CD8-positive, alpha-beta T cell (primary cell): ENCODE measurements at regions of chr15 and their contacts with region 1.

Region 1: GRCh38 chr15:42273102-42273899 is at the starts of genes GANC and TMEM87A:
- DNase-seq: peak; percentile 91 to 99 (median 95)
- ATAC-seq: peak; percentile 90
- H3K4me3 ChIP-seq: peak within 1 kb of the TSS; percentile 90 to 93
- H3K4me3 Mint-ChIP-seq: peak within 1 kb of the TSS; percentile 99
- H3K27ac ChIP-seq: peak within 1 kb of the TSS; percentile 95 to 96
- H3K27ac Mint-ChIP-seq: peak within 1 kb of the TSS; percentile 100
- H3K4me1 ChIP-seq: peaks cover 38% of the 10 kb centered on the region
- H3K4me1 Mint-ChIP-seq: peaks cover 61% of the 10 kb centered on the region
- H3K27me3 ChIP-seq: no peaks in the 10 kb centered on the region
- H3K27me3 Mint-ChIP-seq: no peaks in the 10 kb centered on the region
- CTCF ChIP-seq: no peak
- total RNA-seq, gene GANC: 15.5 to 19.3 TPM
- total RNA-seq, gene TMEM87A: 71.0 to 74.5 TPM

Region 2: GRCh38 chr15:41116116-41116871 is 1157.0 kb before region 1 on chr15 and contains the start of gene INO80:
- CTCF ChIA-PET with region 1: no interaction called
- POLR2A ChIA-PET with region 1: no interaction called
- intact Hi-C with region 1: loop called in 1 of 2 experiments (anchors 10 kb)
- DNase-seq: peak; percentile 90 to 98 (median 96)
- ATAC-seq: peak; percentile 74
- H3K4me3 ChIP-seq: peak within 1 kb of the TSS; percentile 68 to 98
- H3K4me3 Mint-ChIP-seq: peak within 1 kb of the TSS; percentile 96
- H3K27ac ChIP-seq: peak within 1 kb of the TSS; percentile 83 to 96
- H3K27ac Mint-ChIP-seq: peak within 1 kb of the TSS; percentile 99
- H3K4me1 ChIP-seq: peaks cover 15% of the 10 kb centered on the region
- H3K4me1 Mint-ChIP-seq: peaks cover 28% of the 10 kb centered on the region
- H3K27me3 ChIP-seq: no peaks in the 10 kb centered on the region
- H3K27me3 Mint-ChIP-seq: no peaks in the 10 kb centered on the region
- CTCF ChIP-seq: no peak
- total RNA-seq, gene INO80: 19.7 to 24.2 TPM

Region 3: DNA sequence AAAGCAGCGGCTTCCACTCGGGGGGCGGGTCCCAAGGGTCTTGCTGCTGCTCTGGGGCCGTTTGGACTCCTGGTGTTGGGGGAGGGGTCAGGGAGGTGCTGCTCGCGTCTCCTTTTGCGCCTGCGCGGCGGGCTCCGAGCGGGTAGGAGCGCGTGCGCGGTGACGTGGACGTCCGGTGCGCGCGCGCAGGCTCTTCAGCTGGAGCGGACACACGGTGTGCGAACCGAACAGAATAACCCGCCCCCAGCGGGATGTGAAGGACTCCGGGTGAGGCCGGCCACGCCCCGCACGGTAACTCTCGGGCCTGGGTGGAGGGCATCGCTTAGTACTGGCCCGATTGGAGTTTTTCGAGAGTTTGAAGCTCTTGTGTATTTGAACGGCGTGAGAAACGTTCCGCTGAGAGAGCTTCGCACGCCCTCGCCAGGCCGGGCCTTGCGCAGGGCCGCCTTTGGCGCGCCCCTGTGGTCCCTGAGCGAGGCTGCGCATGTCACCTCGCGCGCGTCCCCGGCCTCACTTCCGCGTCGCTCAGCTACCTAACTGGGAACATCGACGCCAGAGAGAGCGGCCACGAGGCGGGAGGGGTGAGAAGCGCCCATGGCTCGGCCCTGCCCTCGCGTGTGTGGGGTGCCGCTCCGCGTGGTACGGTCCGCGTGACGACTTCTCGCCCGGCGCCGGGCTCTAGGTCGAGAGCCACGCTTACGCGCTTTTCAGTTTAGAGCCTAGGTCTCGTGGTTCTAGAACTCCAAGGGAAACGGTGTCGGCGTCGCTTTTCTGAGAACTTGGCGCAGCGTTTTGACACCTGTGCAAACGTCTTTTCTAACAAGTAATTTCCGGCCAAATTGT is 612.8 kb before region 1 on chr15 and contains the start of gene MGA:
- CTCF ChIA-PET with region 1: no interaction called
- POLR2A ChIA-PET with region 1: no interaction called
- intact Hi-C with region 1: loop called in 1 of 2 experiments (anchors 2 kb)
- DNase-seq: peak; percentile 74 to 95 (median 89)
- ATAC-seq: peak; percentile 79
- H3K4me3 ChIP-seq: peak within 1 kb of the TSS; percentile 56 to 62
- H3K4me3 Mint-ChIP-seq: peak within 1 kb of the TSS; percentile 86
- H3K27ac ChIP-seq: peak within 1 kb of the TSS; percentile 90 to 98
- H3K27ac Mint-ChIP-seq: peak within 1 kb of the TSS; percentile 89
- H3K4me1 ChIP-seq: peaks cover 31% of the 10 kb centered on the region
- H3K4me1 Mint-ChIP-seq: peaks cover 54% of the 10 kb centered on the region
- H3K27me3 ChIP-seq: peaks cover 0 to 3% of the 10 kb centered on the region in 2 experiments
- H3K27me3 Mint-ChIP-seq: no peaks in the 10 kb centered on the region
- CTCF ChIP-seq: no peak
- total RNA-seq, gene MGA: 32.9 to 35.7 TPM

Region 4: GRCh38 chr15:41795996-41796856 is 477.1 kb before region 1 on chr15:
- CTCF ChIA-PET with region 1: no interaction called
- POLR2A ChIA-PET with region 1: no interaction called
- intact Hi-C with region 1: no loop called
- DNase-seq: no peak
- ATAC-seq: no peak
- H3K4me3 ChIP-seq: no peak overlapping the region
- H3K4me3 Mint-ChIP-seq: no peak overlapping the region
- H3K27ac ChIP-seq: no peak overlapping the region
- H3K27ac Mint-ChIP-seq: peak overlapping the region; percentile 62
- H3K4me1 ChIP-seq: peaks cover 12% of the 10 kb centered on the region
- H3K4me1 Mint-ChIP-seq: peaks cover 28% of the 10 kb centered on the region
- H3K27me3 ChIP-seq: no peaks in the 10 kb centered on the region
- H3K27me3 Mint-ChIP-seq: no peaks in the 10 kb centered on the region
- CTCF ChIP-seq: no peak

Region 5: DNA sequence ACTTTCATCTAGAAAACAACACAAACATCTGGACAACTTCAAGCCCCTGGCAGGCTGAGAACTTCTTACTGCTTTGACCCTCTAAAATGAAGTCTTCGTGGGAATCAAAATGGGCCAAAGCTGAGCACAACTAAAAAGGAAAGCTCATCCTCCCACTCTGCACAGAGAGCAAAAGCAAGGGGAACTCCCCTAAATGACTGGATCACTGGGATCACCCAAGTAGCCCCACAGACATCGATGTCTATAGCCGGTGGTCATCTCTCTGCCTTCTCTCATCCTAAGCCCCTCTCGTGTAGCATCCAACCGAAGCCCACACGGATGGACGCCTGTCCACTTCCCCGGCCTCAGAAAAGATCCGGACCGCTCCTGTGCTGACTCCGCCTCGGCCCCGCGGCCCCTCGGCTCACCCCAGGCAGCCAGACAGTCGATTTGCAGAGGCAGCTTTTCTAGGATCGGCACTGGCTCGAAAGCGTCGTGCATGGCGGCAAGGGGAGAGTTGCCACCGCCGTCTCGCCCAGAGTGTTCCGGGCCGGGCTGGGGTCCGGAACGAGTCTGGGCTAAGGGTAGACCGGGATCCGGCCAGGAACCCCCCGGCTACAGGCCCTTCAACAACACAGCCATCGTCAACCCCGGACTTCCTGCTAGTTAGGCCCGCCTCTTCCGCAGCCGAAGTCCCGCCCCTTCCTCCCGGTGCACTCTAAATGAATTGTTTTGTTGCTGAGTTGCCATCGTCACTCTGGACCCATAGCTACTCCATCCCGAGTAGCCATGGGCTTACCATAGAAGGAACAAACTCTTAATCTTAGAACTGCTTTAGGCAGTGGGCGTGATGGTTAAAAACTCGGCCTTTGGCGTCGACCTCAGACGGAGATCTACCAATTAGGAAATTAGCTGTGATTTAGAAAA is 65.4 kb before region 1 on chr15 and contains the start of gene VPS39:
- CTCF ChIA-PET with region 1: no interaction called
- POLR2A ChIA-PET with region 1: interaction called, 6 read pairs
- intact Hi-C with region 1: loop called (anchors 1 kb)
- DNase-seq: peak; percentile 65 to 90 (median 85)
- ATAC-seq: peak; percentile 98
- H3K4me3 ChIP-seq: peak within 1 kb of the TSS; percentile 73 to 96
- H3K4me3 Mint-ChIP-seq: peak within 1 kb of the TSS; percentile 97
- H3K27ac ChIP-seq: peak within 1 kb of the TSS; percentile 83 to 84
- H3K27ac Mint-ChIP-seq: peak within 1 kb of the TSS; percentile 95
- H3K4me1 ChIP-seq: peaks cover 23% of the 10 kb centered on the region
- H3K4me1 Mint-ChIP-seq: peaks cover 40% of the 10 kb centered on the region
- H3K27me3 ChIP-seq: no peaks in the 10 kb centered on the region
- H3K27me3 Mint-ChIP-seq: no peaks in the 10 kb centered on the region
- CTCF ChIP-seq: no peak
- total RNA-seq, gene VPS39: 81.5 to 82.9 TPM

Region 6: GRCh38 chr15:42575188-42576039 is 302.1 kb after region 1 on chr15 and contains the start of gene STARD9:
- CTCF ChIA-PET with region 1: no interaction called
- POLR2A ChIA-PET with region 1: no interaction called
- intact Hi-C with region 1: loop called (anchors 1 to 10 kb)
- DNase-seq: peak; percentile 89 to 97 (median 93)
- ATAC-seq: peak; percentile 91
- H3K4me3 ChIP-seq: peak within 1 kb of the TSS; percentile 87 to 89
- H3K4me3 Mint-ChIP-seq: peak within 1 kb of the TSS; percentile 93
- H3K27ac ChIP-seq: peak within 1 kb of the TSS; percentile 41 to 57
- H3K27ac Mint-ChIP-seq: peak within 1 kb of the TSS; percentile 74
- H3K4me1 ChIP-seq: peaks cover 16% of the 10 kb centered on the region
- H3K4me1 Mint-ChIP-seq: peaks cover 27% of the 10 kb centered on the region
- H3K27me3 ChIP-seq: no peaks in the 10 kb centered on the region
- H3K27me3 Mint-ChIP-seq: no peaks in the 10 kb centered on the region
- CTCF ChIP-seq: no peak
- total RNA-seq, gene STARD9: 8.5 to 9.0 TPM

Region 7: GRCh38 chr15:42591238-42591934 is 318.1 kb after region 1 on chr15:
- CTCF ChIA-PET with region 1: no interaction called
- POLR2A ChIA-PET with region 1: no interaction called
- intact Hi-C with region 1: no loop called
- DNase-seq: peak in 1 of 9 experiments; percentile 13
- ATAC-seq: no peak
- H3K4me3 ChIP-seq: no peak overlapping the region
- H3K4me3 Mint-ChIP-seq: no peak overlapping the region
- H3K27ac ChIP-seq: no peak overlapping the region
- H3K27ac Mint-ChIP-seq: no peak overlapping the region
- H3K4me1 ChIP-seq: no peaks in the 10 kb centered on the region
- H3K4me1 Mint-ChIP-seq: no peaks in the 10 kb centered on the region
- H3K27me3 ChIP-seq: no peaks in the 10 kb centered on the region
- H3K27me3 Mint-ChIP-seq: no peaks in the 10 kb centered on the region
- CTCF ChIP-seq: no peak

Region 8: GRCh38 chr15:43105778-43106485 is 832.6 kb after region 1 on chr15 and contains the start of gene UBR1:
- CTCF ChIA-PET with region 1: no interaction called
- POLR2A ChIA-PET with region 1: no interaction called
- intact Hi-C with region 1: loop called in 1 of 2 experiments (anchors 5 kb)
- DNase-seq: peak; percentile 71 to 97 (median 88)
- ATAC-seq: peak; percentile 84
- H3K4me3 ChIP-seq: peak within 1 kb of the TSS; percentile 72 to 86
- H3K4me3 Mint-ChIP-seq: peak within 1 kb of the TSS; percentile 89
- H3K27ac ChIP-seq: peak within 1 kb of the TSS; percentile 87 to 96
- H3K27ac Mint-ChIP-seq: peak within 1 kb of the TSS; percentile 99
- H3K4me1 ChIP-seq: peaks cover 24% of the 10 kb centered on the region
- H3K4me1 Mint-ChIP-seq: peaks cover 48% of the 10 kb centered on the region
- H3K27me3 ChIP-seq: no peaks in the 10 kb centered on the region
- H3K27me3 Mint-ChIP-seq: no peaks in the 10 kb centered on the region
- CTCF ChIP-seq: no peak
- total RNA-seq, gene UBR1: 53.4 to 54.3 TPM

Region 9: GRCh38 chr15:43510200-43511011 is 1237.1 kb after region 1 on chr15:
- CTCF ChIA-PET with region 1: no interaction called
- POLR2A ChIA-PET with region 1: no interaction called
- intact Hi-C with region 1: loop called in 1 of 2 experiments (anchors 10 kb)
- DNase-seq: peak; percentile 88 to 98 (median 96)
- ATAC-seq: peak; percentile 90
- H3K4me3 ChIP-seq: peak overlapping the region; percentile 65 to 81
- H3K4me3 Mint-ChIP-seq: peak overlapping the region; percentile 94
- H3K27ac ChIP-seq: peak overlapping the region; percentile 74 to 82
- H3K27ac Mint-ChIP-seq: peak overlapping the region; percentile 96
- H3K4me1 ChIP-seq: peaks cover 21% of the 10 kb centered on the region
- H3K4me1 Mint-ChIP-seq: peaks cover 27% of the 10 kb centered on the region
- H3K27me3 ChIP-seq: no peaks in the 10 kb centered on the region
- H3K27me3 Mint-ChIP-seq: no peaks in the 10 kb centered on the region
- CTCF ChIP-seq: peak; percentile 10